Activated CD8-positive, alpha-beta memory T cell treated with anti-CD3 and anti-CD28 coated beads, Interleukin-2, amount 10 ng/mL, durations not matched to agents 7 days and 5 days (primary cell): ENCODE measurements at regions of chr14 and their contacts with region 1.

Region 1: GRCh38 chr14:91323671-91324605 is 79.4 kb upstream of the GPR68 start:
- DNase-seq: peak; percentile 95
- ATAC-seq: peak; percentile 84
- H3K4me3 Mint-ChIP-seq: peak overlapping the region; percentile 72
- H3K27ac Mint-ChIP-seq: peak overlapping the region; percentile 97
- H3K4me1 Mint-ChIP-seq: peaks cover 65% of the 10 kb centered on the region
- H3K27me3 Mint-ChIP-seq: no peaks in the 10 kb centered on the region

Region 2: GRCh38 chr14:91341751-91342154 is 17.8 kb after region 1 on chr14:
- CTCF ChIA-PET with region 1: interaction called, 15 read pairs
- DNase-seq: no peak
- ATAC-seq: no peak
- H3K4me3 Mint-ChIP-seq: no peak overlapping the region
- H3K27ac Mint-ChIP-seq: no peak overlapping the region
- H3K4me1 Mint-ChIP-seq: peaks cover 14% of the 10 kb centered on the region
- H3K27me3 Mint-ChIP-seq: no peaks in the 10 kb centered on the region

Region 3: DNA sequence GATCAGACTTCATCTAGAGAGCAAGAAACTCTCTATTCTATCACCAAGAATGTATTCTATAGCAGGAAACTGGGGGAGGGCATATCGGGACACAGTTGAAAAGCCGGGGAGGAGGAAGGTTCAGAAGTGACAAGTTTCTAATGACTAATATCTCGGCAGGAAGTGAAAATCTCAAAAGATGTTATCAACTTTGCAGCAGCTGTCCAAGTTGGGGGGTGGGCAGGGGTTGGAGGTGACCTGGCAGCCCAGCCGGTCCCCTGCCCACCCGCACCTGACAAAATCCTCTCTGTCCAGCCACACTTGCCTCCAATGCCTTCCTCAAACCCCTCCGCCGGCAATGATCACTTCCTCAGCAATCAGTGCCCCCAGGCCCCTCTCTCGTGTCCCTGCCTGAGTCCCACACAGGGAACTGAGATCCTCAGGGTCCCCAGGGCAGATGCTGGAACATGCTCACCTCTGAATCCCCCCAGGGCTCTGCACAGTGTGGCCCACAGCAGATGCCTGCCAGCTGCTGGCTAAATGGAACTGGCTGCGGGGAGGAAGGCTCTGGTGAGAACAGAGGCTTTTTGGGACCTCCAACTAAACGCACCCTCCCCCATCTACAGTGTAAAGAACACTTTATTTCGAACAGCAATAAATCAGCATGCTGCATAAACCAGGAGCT is 49.8 kb after region 1 on chr14:
- CTCF ChIA-PET with region 1: interaction called, 28 read pairs
- DNase-seq: peak; percentile 81
- ATAC-seq: peak; percentile 57
- H3K4me3 Mint-ChIP-seq: peak overlapping the region; percentile 70
- H3K27ac Mint-ChIP-seq: peak overlapping the region; percentile 96
- H3K4me1 Mint-ChIP-seq: peaks cover 100% of the 10 kb centered on the region
- H3K27me3 Mint-ChIP-seq: no peaks in the 10 kb centered on the region

Region 4: DNA sequence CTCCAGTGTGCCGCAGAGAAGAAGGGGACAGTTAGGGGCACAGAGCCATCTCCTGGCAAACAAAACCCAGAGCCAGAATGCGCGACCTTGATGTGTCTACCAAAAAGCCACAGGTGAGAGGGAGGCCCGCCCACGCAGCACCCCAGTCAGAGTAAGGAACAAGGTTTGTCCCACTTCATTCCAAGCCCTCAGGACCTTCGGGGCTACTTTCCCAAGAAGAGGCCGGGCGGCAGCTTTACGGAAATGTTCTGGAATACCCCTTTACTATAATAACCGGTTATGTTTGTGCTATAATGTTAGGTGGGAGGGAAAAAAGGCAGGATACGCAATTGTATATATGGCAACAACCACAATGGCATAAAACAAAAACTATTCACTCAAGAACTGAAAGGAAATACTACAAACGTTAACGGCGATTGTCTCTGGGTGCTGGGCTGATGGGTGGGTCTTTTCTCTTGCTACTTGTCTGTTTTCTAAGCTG is 81.3 kb after region 1 on chr14:
- CTCF ChIA-PET with region 1: interaction called, 175 read pairs
- DNase-seq: peak; percentile 77
- ATAC-seq: peak; percentile 32
- H3K4me3 Mint-ChIP-seq: peak overlapping the region; percentile 60
- H3K27ac Mint-ChIP-seq: peak overlapping the region; percentile 88
- H3K4me1 Mint-ChIP-seq: peaks cover 91% of the 10 kb centered on the region
- H3K27me3 Mint-ChIP-seq: no peaks in the 10 kb centered on the region

Region 5: GRCh38 chr14:91418387-91419043 is 94.6 kb after region 1 on chr14:
- CTCF ChIA-PET with region 1: interaction called, 175 read pairs
- DNase-seq: peak; percentile 88
- ATAC-seq: peak; percentile 23
- H3K4me3 Mint-ChIP-seq: peak overlapping the region; percentile 68
- H3K27ac Mint-ChIP-seq: peak overlapping the region; percentile 75
- H3K4me1 Mint-ChIP-seq: peaks cover 28% of the 10 kb centered on the region
- H3K27me3 Mint-ChIP-seq: peaks cover 5% of the 10 kb centered on the region